A673 (cell line): ENCODE measurements at regions of chr10 and their contacts with region 1.

Region 1: GRCh38 chr10:117216611-117217195 is 19.4 kb downstream of the KCNK18 start:
- DNase-seq: peak; percentile 80
- H3K4me3 ChIP-seq: peak overlapping the region; percentile 41
- H3K27ac ChIP-seq: no peak overlapping the region
- H3K4me1 ChIP-seq: peaks cover 13% of the 10 kb centered on the region
- H3K27me3 ChIP-seq: peaks cover 21% of the 10 kb centered on the region
- CTCF ChIP-seq: peak; percentile 100

Region 2: DNA sequence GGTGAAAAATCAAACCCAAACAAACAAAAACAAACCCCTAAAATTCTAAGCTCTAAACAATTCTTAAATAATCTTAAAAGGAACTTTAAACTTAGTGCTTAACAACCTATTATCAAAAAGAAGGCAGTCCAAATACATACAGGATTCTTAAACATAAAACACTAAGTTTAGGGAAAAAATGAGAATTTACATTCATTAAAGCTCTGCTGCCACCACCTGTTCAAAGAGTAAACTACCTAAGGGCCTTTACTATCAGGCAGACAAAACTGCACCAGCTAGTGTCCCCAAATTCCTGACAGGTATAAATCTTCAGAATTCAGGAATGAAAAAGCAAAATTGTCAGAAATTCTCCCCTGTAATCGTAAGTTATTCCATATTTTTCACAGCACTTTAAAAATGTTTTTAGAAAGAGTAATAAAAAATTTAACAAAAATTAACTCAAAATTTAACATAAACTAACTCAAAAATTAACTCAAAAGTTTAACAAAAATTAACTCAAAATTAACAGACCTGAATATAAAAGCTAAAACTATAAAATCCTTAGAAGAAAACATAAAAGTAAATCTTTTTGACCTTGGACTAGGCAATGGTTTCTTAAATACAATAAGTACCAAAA is 103.5 kb after region 1 on chr10:
- CTCF ChIA-PET with region 1: interaction called, 41 read pairs
- POLR2A ChIA-PET with region 1: no interaction called
- intact Hi-C with region 1: loop called (anchors 1 kb)
- DNase-seq: peak; percentile 54
- H3K4me3 ChIP-seq: no peak overlapping the region
- H3K27ac ChIP-seq: no peak overlapping the region
- H3K4me1 ChIP-seq: no peaks in the 10 kb centered on the region
- H3K27me3 ChIP-seq: no peaks in the 10 kb centered on the region
- CTCF ChIP-seq: peak; percentile 73